ENCODE measurements at regions of chr10 and their contacts with region 1.

Region 1: DNA sequence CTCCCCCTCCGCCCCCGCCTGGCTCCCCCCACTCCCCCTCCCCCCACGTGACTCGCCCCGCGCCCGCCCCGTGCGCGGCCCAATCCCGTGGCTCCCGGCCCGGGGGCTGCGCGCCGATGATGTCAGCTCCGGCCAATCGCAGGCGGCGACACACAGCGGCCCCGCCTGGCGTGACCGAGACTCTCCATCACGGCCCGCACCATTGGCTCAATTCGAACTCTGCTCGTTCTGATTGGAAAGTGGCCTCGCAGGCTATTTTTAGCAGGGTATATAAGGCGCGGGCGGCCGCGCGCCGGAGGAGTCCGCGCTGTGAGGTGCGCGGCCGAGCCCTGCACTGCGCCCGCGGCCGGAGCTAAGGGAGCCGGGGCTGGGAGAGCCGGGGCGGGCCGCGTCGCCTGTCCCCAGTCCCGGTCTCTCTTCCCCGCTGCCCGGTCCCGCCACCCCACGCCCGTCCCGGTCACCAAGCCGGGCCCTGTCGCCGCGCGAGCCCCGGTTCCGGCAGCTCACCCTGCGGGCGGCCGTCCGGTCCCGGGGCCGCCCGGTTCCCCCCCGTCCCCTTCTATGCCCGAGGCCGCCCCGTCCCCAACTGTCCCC is 345 bp upstream of the KLF6 start:
- DNase-seq: peak; percentile 90
- ATAC-seq: peak; percentile 66
- H3K4me3 ChIP-seq: peak overlapping the region; percentile 78
- H3K27ac ChIP-seq: peak overlapping the region; percentile 96
- H3K4me1 ChIP-seq: peaks cover 14% of the 10 kb centered on the region
- H3K27me3 ChIP-seq: no peaks in the 10 kb centered on the region
- CTCF ChIP-seq: no peak
- EP300 ChIP-seq: 0 out of 4 replicates have a peak, but pooled peaks of 1 of the 2 experiments have one; percentile 4
- POLR2A ChIP-seq: peak; percentile 88
- RAD21 ChIP-seq: no peak

Region 2: DNA sequence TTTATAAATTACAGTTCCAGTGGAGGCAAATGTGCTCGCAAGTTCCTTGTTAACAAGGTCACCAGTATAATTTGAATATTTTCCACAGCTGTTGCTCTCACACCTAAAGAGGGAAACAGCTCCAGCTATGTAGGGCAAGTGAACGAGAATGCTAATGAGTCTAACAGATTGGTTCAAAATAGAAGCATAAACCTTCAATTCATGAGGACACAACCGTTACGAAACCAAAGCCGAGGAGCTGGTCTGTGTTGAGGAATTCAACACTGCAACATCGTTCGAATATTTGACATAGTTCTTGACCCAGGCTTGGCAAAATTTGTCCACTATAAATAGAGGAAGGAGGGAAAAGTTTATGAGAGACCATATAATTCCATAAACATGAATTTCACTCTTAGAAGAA is 161.6 kb before region 1 on chr10:
- CTCF ChIA-PET with region 1: interaction called, 7 read pairs
- POLR2A ChIA-PET with region 1: no interaction called
- RAD21 ChIA-PET with region 1: interaction called, 13 read pairs
- SMC1A ChIA-PET with region 1: no interaction called
- in situ Hi-C with region 1: no loop called
- intact Hi-C with region 1: loop called (anchors 5 kb)
- DNase-seq: peak; percentile 48
- ATAC-seq: peak; percentile 57
- H3K4me3 ChIP-seq: no peak overlapping the region
- H3K27ac ChIP-seq: peak overlapping the region; percentile 17; the same call in 1 of the 2 replicates
- H3K4me1 ChIP-seq: peaks cover 34% of the 10 kb centered on the region
- H3K27me3 ChIP-seq: no peaks in the 10 kb centered on the region
- CTCF ChIP-seq: no peak
- EP300 ChIP-seq: peak in 1 of 2 experiments; percentile 36; a peak in 1 of 4 replicates
- POLR2A ChIP-seq: no peak
- RAD21 ChIP-seq: no peak

Region 3: DNA sequence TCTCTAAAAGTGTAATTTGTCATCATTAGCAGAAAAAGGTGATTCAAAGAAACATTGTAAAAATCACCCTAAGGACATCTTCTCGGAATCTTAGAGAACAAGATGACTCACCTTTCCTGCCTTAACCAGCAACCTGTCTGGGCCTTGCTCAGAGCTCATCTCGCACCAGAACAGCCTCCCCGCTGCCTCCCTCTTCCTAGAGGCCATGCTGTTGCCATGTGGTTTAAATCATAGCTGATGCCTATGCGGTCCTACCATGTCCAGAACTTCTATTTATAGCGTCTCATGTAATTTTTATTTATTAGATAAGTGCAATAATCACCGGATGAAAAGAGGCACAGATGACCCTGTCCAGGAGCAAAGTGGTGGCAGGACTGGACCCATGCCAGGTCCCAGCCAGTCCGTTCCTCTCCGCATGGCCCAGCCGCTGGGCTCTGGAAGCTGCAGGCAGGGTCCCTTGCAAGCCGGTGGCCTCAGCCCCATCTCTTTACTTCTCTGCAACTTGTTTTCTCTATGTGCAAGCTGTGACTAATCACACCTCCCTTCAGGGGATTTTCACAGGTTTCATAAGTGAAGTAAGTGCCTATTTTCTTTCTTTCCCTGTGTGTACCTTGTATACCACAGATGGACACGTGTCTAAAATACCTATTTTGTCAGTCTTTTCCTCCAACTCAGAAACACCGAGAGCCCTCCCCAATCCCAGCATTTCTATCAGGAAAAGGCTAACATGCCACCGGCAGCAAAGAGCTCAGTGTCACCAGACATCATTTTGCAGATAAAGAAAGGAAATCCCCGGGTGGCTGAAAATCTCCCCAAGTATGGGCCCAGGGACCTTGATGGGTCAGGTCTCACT is 27.5 kb before region 1 on chr10:
- CTCF ChIA-PET with region 1: interaction called, 12 read pairs
- POLR2A ChIA-PET with region 1: interaction called, 27 read pairs
- RAD21 ChIA-PET with region 1: interaction called, 43 read pairs
- SMC1A ChIA-PET with region 1: interaction called, 10 read pairs
- in situ Hi-C with region 1: no loop called
- intact Hi-C with region 1: no loop called
- DNase-seq: peak; percentile 82
- ATAC-seq: peak; percentile 88
- H3K4me3 ChIP-seq: no peak overlapping the region; the same call in 1 of the 2 replicates
- H3K27ac ChIP-seq: peak overlapping the region; percentile 76
- H3K4me1 ChIP-seq: peaks cover 35% of the 10 kb centered on the region
- H3K27me3 ChIP-seq: no peaks in the 10 kb centered on the region
- CTCF ChIP-seq: no peak
- EP300 ChIP-seq: peak; percentile 65 to 81; a peak in 3 of 4 replicates
- POLR2A ChIP-seq: peak; percentile 44; the same call in 1 of the 2 replicates
- RAD21 ChIP-seq: peak; percentile 9; the same call in 1 of the 2 replicates

Region 4: GRCh38 chr10:3835770-3836169 is 50.4 kb after region 1 on chr10:
- CTCF ChIA-PET with region 1: interaction called, 10 read pairs
- POLR2A ChIA-PET with region 1: interaction called, 39 read pairs
- RAD21 ChIA-PET with region 1: interaction called, 50 read pairs
- SMC1A ChIA-PET with region 1: interaction called, 43 read pairs
- in situ Hi-C with region 1: no loop called
- intact Hi-C with region 1: loop called (anchors 2 kb)
- DNase-seq: no peak
- ATAC-seq: peak; percentile 75
- H3K4me3 ChIP-seq: peak overlapping the region; percentile 46
- H3K27ac ChIP-seq: peak overlapping the region; percentile 88
- H3K4me1 ChIP-seq: peaks cover 23% of the 10 kb centered on the region
- H3K27me3 ChIP-seq: no peaks in the 10 kb centered on the region
- CTCF ChIP-seq: no peak
- EP300 ChIP-seq: no peak; a peak in 1 of 4 replicates
- POLR2A ChIP-seq: no peak
- RAD21 ChIP-seq: no peak

Region 5: GRCh38 chr10:3887885-3888476 is 102.6 kb after region 1 on chr10:
- CTCF ChIA-PET with region 1: interaction called, 3 read pairs
- POLR2A ChIA-PET with region 1: interaction called, 11 read pairs
- RAD21 ChIA-PET with region 1: interaction called, 11 read pairs
- SMC1A ChIA-PET with region 1: interaction called, 10 read pairs
- in situ Hi-C with region 1: no loop called
- intact Hi-C with region 1: no loop called
- DNase-seq: peak; percentile 66
- ATAC-seq: peak; percentile 92
- H3K4me3 ChIP-seq: no peak overlapping the region
- H3K27ac ChIP-seq: peak overlapping the region; percentile 67
- H3K4me1 ChIP-seq: peaks cover 15% of the 10 kb centered on the region
- H3K27me3 ChIP-seq: no peaks in the 10 kb centered on the region
- CTCF ChIP-seq: no peak
- EP300 ChIP-seq: peak in 1 of 2 experiments; percentile 54; a peak in 2 of 4 replicates
- POLR2A ChIP-seq: no peak
- RAD21 ChIP-seq: 0 out of 2 replicates have a peak, but pooled peaks have one; percentile 0

Region 6: DNA sequence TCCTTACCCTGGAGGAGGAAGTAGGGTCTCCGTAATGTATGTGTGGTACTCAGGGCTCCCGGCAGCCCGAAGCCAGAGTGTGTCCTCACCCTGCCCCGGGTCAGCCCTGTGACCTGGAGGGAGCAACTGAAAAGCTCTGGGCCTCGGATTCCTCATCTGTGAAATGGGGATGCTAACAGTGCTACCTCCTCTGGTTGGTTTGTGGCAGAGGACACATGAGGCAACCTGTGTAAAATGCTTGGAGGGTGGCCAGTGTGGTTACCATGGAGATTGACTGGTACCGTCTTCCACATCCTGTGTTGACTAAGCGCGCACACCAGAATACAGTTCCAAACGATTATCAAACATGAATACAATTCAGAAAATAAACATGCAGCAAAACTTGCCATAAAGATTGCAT is 163.5 kb after region 1 on chr10:
- CTCF ChIA-PET with region 1: no interaction called
- POLR2A ChIA-PET with region 1: no interaction called
- RAD21 ChIA-PET with region 1: no interaction called
- SMC1A ChIA-PET with region 1: no interaction called
- in situ Hi-C with region 1: no loop called
- intact Hi-C with region 1: no loop called
- DNase-seq: no peak
- ATAC-seq: no peak
- H3K4me3 ChIP-seq: no peak overlapping the region
- H3K27ac ChIP-seq: no peak overlapping the region
- H3K4me1 ChIP-seq: no peaks in the 10 kb centered on the region
- H3K27me3 ChIP-seq: no peaks in the 10 kb centered on the region
- CTCF ChIP-seq: no peak
- EP300 ChIP-seq: no peak
- POLR2A ChIP-seq: no peak
- RAD21 ChIP-seq: no peak

Region 7: DNA sequence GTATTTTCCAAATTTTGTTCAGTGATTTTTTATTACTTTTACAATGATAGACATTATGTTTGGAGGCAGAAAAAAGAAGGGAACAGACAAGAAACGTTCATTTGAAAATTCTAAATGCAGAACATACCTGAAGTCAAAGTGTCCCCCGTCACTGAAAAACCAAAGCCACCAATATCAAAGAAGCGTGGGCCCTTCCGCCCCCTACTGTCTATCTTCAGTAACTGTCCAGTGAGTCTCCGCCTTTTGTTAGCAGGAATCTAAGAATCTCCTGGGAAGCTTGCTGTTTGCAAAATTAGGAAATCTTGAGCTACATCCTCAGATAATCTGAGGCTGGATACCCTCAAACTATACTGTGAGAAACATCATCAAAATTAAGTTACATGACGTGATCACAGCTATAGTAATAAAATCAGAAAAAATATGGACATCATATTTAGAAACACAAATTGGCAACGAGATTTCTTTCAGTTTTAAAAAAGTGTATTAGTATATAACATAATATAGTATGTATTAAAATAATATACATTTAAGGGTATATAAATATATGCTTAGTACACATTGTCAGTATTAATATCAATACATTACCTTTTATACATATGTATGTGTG is 871.3 kb after region 1 on chr10:
- CTCF ChIA-PET with region 1: interaction called, 3 read pairs
- POLR2A ChIA-PET with region 1: no interaction called
- RAD21 ChIA-PET with region 1: interaction called, 3 read pairs
- SMC1A ChIA-PET with region 1: interaction called, 7 read pairs
- in situ Hi-C with region 1: no loop called
- intact Hi-C with region 1: loop called (anchors 10 kb)
- DNase-seq: no peak
- ATAC-seq: peak; percentile 47; the same call in 1 of the 3 replicates
- H3K4me3 ChIP-seq: no peak overlapping the region
- H3K27ac ChIP-seq: no peak overlapping the region
- H3K4me1 ChIP-seq: no peaks in the 10 kb centered on the region
- H3K27me3 ChIP-seq: no peaks in the 10 kb centered on the region
- CTCF ChIP-seq: peak; percentile 74 to 79 (median 77)
- EP300 ChIP-seq: no peak
- POLR2A ChIP-seq: no peak
- RAD21 ChIP-seq: peak; percentile 95

Measured in GM12878 (cell line).